Mammary epithelial cell (primary cell): ENCODE measurements at regions of chr1 and their contacts with region 1.

Region 1: DNA sequence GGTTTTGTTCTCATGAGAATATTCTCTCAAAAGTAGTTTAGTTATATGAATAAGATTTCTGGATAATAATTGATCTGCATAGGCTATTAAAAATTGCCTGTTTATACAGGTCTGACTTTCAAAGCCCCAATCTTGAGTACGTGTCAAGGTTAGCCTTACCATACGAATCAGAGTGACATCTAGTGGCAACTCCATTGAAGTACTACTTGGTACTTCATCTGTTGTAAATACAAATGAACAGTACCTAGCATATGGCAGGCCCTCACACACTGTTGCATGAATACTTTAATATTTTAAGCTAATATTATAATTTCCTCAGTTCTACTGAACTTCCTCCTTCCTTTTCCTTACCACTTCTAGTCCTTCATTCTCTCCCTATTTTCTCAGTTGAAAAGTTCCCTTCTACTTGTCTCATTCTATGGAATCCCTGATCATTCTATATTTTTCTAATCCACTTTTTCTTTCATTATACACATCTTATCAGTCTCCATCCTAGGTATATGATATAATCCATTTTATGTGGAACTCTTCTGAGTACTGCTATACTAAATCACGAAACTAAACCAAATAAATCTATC is 101.2 kb downstream of the AKT3 start:
- DNase-seq: peak; percentile 56
- H3K4me3 ChIP-seq: no peak overlapping the region
- H3K27ac ChIP-seq: no peak overlapping the region
- H3K4me1 ChIP-seq: peaks cover 9% of the 10 kb centered on the region
- H3K27me3 ChIP-seq: no peaks in the 10 kb centered on the region
- CTCF ChIP-seq: peak; percentile 72 to 85

Region 2: DNA sequence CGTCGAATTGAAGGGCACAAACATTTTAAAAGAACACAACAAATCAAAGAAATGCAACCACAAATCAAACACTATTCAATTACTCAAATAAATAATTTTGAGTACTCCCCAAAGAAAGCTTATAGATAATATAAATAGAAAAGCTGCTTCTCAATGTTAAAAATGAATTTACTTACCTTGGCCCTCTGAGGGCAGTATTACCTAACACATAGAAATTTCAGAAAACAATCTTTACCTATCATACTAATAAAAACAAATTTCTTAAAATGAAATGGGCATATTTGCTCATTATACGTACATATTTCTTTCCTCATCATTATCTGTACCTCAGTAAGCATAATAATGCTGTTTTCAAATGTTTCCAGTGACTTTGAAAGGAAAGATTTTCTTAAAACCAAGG is 40.6 kb before region 1 on chr1:
- CTCF ChIA-PET with region 1: no interaction called
- dilution Hi-C with region 1: no loop called
- in situ Hi-C with region 1: no loop called
- intact Hi-C with region 1: loop called (anchors 1 kb)
- DNase-seq: no peak
- H3K4me3 ChIP-seq: no peak overlapping the region
- H3K27ac ChIP-seq: no peak overlapping the region
- H3K4me1 ChIP-seq: no peaks in the 10 kb centered on the region
- H3K27me3 ChIP-seq: no peaks in the 10 kb centered on the region
- CTCF ChIP-seq: peak; percentile 17 to 39